Naive thymus-derived CD4-positive, alpha-beta T cell (primary cell): ENCODE measurements at regions of chr16 and their contacts with region 1.

Region 1: GRCh38 chr16:2047330-2048115 is at the starts of genes NTHL1 and TSC2:
- DNase-seq: peak; percentile 81 to 95 (median 87)
- ATAC-seq: peak; percentile 98
- H3K4me3 ChIP-seq: peak within 1 kb of the TSS; percentile 72
- H3K4me3 Mint-ChIP-seq: peak within 1 kb of the TSS; percentile 82 to 97 (median 93)
- H3K27ac ChIP-seq: peak within 1 kb of the TSS; percentile 82
- H3K27ac Mint-ChIP-seq: peak within 1 kb of the TSS in 8 of 9 donors; percentile 57 to 91 (median 82)
- H3K4me1 ChIP-seq: peaks cover 6 to 12% of the 10 kb centered on the region in 2 donors
- H3K4me1 Mint-ChIP-seq: peaks cover 16 to 23% (median 19%) of the 10 kb centered on the region in 7 donors
- H3K27me3 ChIP-seq: no peaks in the 10 kb centered on the region
- H3K27me3 Mint-ChIP-seq: no peaks in the 10 kb centered on the region
- total RNA-seq, gene NTHL1: 4.4 to 27.0 (median 7.5) TPM
- total RNA-seq, gene TSC2: 126 to 155 (median 147) TPM

Region 2: DNA sequence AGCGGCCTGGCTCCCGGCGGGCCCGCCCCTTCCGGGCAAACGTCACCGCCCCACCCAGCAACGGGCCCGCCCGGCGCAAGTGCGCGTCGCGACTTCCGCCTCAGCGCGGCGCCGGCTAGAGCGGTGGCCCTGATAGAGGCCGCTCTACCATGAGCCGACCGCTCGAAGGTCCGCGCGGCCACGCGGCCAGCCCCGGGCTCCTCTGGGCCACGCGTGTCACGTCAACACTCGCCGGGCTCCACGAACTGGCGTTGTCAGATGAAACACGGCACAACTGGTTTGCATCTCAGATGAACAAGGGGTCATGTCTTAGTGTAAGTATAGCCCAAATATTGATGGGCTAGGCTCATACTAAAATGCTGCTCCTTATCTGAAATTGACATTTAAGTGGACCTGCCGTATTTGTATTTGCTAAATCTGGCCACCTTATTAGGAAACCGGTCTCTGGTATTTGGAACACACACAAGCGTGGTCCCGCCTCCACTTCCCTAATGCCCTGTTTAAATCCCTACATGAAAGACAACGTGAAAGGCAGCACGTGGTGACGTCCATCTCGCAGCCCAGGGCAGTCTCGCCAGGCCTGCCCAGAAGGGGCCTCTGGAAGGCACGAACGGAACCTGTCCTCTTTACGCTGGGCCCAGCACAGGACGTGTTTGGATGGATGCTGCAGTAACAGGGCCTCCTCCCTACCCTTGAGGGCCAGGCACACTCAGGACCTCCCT is 37.6 kb before region 1 on chr16 and contains the start of gene ZNF598:
- CTCF ChIA-PET with region 1: no interaction called
- POLR2A ChIA-PET with region 1: no interaction called
- intact Hi-C with region 1: loop called (anchors 1 to 5 kb)
- DNase-seq: peak; percentile 64 to 87 (median 78)
- ATAC-seq: peak; percentile 97
- H3K4me3 ChIP-seq: peak within 1 kb of the TSS; percentile 77
- H3K4me3 Mint-ChIP-seq: peak within 1 kb of the TSS; percentile 87 to 94 (median 92)
- H3K27ac ChIP-seq: peak within 1 kb of the TSS; percentile 91
- H3K27ac Mint-ChIP-seq: peak within 1 kb of the TSS; percentile 85 to 99 (median 97)
- H3K4me1 ChIP-seq: peaks cover 26 to 29% of the 10 kb centered on the region in 2 donors
- H3K4me1 Mint-ChIP-seq: peaks cover 22 to 39% (median 32%) of the 10 kb centered on the region in 7 donors
- H3K27me3 ChIP-seq: no peaks in the 10 kb centered on the region
- H3K27me3 Mint-ChIP-seq: no peaks in the 10 kb centered on the region
- total RNA-seq, gene ZNF598: 44.3 to 63.2 (median 49.8) TPM

Region 3: DNA sequence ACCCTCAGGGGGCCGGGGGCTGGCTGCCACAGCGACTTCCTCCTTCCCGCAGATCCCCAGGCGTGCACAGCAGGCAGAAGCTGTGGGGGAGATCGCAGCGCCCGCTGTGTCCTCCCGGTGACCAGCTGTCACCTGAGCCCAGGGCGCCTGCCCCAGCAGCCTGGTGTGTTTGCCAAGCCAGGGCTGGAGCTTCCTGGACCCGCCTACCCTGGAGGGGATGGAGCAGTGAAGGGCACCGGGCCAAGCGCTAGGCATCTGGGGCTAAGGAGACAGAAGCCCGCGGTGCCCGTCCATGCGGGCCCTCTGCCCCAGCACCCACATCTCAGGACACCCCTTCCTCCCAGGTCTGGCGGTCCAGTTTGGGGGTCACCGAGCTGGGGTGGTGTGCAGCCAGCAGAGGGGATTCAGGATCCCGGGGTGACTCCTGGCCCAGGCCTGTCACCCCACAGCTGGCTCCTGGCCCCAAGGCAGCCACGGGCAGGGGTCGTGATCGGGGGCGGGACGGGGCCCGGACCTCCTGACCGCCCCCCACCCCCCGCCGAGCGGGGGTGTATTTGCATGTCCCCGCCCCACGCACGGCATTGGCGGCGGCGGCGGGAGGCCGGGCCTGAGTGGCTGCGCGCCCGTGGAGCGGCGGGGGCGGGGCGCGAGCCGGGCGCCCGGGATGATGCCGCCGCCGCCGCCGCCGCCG is 100.6 kb after region 1 on chr16 and contains the start of gene RAB26:
- CTCF ChIA-PET with region 1: interaction called, 3 read pairs
- POLR2A ChIA-PET with region 1: no interaction called
- intact Hi-C with region 1: loop called in 1 of 2 experiments (anchors 2 kb)
- DNase-seq: peak; percentile 42 to 76 (median 56)
- ATAC-seq: peak; percentile 92
- H3K4me3 ChIP-seq: no peak within 1 kb of the TSS
- H3K4me3 Mint-ChIP-seq: peak within 1 kb of the TSS in 8 of 10 donors; percentile 29 to 67 (median 52)
- H3K27ac ChIP-seq: peak within 1 kb of the TSS; percentile 20
- H3K27ac Mint-ChIP-seq: peak within 1 kb of the TSS in 1 of 9 donors; percentile 48
- H3K4me1 ChIP-seq: peaks cover 13 to 31% of the 10 kb centered on the region in 2 donors
- H3K4me1 Mint-ChIP-seq: peaks cover 0 to 16% (median 11%) of the 10 kb centered on the region in 7 donors
- H3K27me3 ChIP-seq: no peaks in the 10 kb centered on the region
- H3K27me3 Mint-ChIP-seq: peaks cover 0 to 3% (median 0%) of the 10 kb centered on the region in 5 donors
- total RNA-seq, gene RAB26: 0.86 TPM in 1 of 5 experiments, not detected in the others

Region 4: DNA sequence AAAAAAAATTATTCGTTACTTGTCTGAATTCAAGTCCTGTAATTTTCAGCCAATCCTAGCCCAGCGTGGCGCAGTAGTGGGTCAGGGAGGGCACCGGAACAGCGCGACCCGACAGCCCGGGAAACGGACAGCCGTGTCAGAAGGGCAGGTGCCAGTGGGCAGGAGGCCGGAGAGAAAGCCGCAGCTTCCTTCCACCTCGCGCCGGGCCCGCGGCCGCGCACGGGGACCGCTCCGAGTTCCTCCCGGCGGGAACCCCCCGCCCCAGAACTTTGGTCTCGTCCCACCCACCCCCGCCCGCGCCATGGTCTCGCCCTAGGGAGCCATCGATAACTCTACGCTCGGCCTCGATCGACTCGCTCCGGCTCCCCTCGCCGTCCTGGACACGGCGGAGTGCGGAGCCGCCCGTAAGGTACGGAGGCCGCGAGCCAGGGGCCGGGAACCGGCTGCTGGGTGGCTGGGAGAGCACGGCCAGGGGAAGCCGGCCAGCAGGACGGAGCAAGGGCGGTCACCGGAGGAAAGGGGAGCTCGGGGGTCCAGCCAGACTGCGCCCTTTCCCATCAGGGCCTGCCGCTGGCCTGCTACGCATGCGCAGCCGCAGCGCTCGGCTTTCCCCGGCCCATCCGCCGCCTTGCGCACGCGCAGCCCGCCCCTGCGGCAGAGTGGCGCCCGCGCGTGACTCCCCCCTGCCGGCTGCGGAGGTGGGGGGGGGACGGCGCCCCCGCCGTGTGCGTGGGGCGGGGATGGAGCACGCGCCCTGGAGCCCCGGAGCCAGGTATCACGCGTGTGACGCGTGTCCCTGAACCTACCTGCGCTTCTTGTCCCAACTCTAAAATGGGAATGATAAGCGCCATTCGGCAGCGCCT is 157.8 kb after region 1 on chr16 and contains the start of gene MLST8:
- CTCF ChIA-PET with region 1: no interaction called
- POLR2A ChIA-PET with region 1: interaction called, 3 read pairs
- intact Hi-C with region 1: loop called in 1 of 2 experiments (anchors 1 kb)
- DNase-seq: peak; percentile 88 to 100 (median 98)
- ATAC-seq: peak; percentile 97
- H3K4me3 ChIP-seq: peak within 1 kb of the TSS; percentile 93
- H3K4me3 Mint-ChIP-seq: peak within 1 kb of the TSS; percentile 80 to 95 (median 88)
- H3K27ac ChIP-seq: peak within 1 kb of the TSS; percentile 97
- H3K27ac Mint-ChIP-seq: peak within 1 kb of the TSS; percentile 70 to 91 (median 86)
- H3K4me1 ChIP-seq: peaks cover 11 to 13% of the 10 kb centered on the region in 2 donors
- H3K4me1 Mint-ChIP-seq: peaks cover 7 to 29% (median 21%) of the 10 kb centered on the region in 7 donors
- H3K27me3 ChIP-seq: no peaks in the 10 kb centered on the region
- H3K27me3 Mint-ChIP-seq: peaks cover 0 to 11% (median 0%) of the 10 kb centered on the region in 5 donors
- total RNA-seq, gene MLST8: 25.1 to 41.2 (median 35.5) TPM

Region 5: DNA sequence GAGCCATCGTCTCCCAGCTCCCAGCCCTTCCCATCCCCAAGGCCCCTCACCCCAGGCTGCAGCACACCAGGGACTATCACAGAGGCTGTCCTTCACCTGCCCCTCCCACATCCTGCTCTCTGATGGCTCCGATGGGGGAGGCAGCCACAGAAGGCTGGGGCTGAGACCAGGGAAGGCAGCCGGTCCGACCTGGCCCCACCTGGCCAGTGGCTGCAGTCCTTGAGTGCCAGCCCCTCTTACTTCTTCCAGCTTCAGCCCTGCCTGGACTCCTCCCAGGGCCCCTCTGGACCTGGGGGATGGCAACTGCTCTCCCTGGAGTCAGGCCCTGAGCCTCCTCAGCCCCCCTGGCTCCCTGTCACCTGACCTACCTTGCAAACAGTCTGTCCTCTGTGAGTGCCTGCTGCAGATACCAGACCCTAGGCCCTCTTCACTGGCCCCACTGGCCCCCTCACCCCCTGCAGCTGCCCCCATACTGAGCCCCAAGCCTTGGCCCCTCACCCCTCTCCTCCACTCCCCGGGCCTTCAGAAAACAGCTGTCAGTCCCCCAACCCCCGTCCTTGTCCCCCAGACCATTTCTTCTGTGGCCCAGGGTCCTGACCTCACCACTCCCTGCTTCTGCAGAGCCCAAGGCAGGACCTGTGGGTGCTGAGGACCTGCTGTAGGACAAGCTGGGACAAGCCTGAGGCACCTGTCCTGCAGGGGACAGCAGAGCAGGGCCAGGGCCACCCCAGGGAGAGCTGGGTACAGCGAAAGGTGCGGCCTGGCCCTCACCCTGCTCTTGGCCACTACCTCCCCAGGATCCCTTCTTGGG is 692.3 kb after region 1 on chr16:
- CTCF ChIA-PET with region 1: no interaction called
- POLR2A ChIA-PET with region 1: no interaction called
- intact Hi-C with region 1: no loop called
- DNase-seq: no peak
- ATAC-seq: no peak
- H3K4me3 ChIP-seq: no peak overlapping the region
- H3K4me3 Mint-ChIP-seq: no peak overlapping the region
- H3K27ac ChIP-seq: no peak overlapping the region
- H3K27ac Mint-ChIP-seq: peak overlapping the region in 1 of 9 donors; percentile 71
- H3K4me1 ChIP-seq: no peaks in the 10 kb centered on the region
- H3K4me1 Mint-ChIP-seq: no peaks in the 10 kb centered on the region
- H3K27me3 ChIP-seq: no peaks in the 10 kb centered on the region
- H3K27me3 Mint-ChIP-seq: peaks cover 0 to 3% (median 0%) of the 10 kb centered on the region in 5 donors